CD8-positive, alpha-beta T cell (primary cell): ENCODE measurements at regions of chr20 and their contacts with region 1.

Region 1: DNA sequence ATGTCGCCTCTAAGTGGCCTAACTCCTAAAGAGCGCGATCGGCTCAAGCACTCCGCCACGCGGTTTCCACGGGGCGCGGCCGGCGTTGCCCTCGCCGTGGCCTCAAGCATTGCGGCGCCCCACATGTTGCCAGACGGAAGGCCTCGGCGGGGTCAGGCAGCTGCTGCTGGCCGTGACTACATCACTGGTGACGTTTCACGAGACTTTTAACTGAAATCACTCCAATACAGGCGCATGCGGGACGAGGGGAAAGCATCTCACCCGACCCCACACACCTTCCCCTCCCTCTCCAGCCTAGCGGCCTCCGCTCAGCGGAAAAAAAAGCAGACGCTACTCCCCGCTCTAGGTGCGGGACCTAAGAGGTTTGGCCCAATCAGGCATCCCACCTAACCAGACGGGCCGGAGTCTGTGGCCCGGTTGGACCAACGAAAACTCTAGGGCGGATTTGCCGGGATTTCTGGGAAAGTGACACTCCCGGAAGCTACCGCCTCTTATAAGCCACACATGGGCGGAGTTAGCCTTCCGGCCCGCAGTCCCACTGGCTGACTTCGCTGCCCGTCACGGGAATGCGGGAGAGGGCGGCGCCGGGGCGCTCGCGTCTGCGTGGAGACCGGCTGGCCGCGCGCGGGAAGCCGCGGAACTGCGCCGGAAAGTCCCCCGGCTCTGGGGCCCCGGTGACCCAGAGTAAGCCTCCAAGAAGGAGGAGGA is at the start of gene NXT1:
- DNase-seq: peak; percentile 92 to 98 (median 94)
- ATAC-seq: peak; percentile 77
- H3K4me3 ChIP-seq: peak within 1 kb of the TSS; percentile 89 to 97
- H3K4me3 Mint-ChIP-seq: peak within 1 kb of the TSS; percentile 80
- H3K27ac ChIP-seq: peak within 1 kb of the TSS; percentile 99
- H3K27ac Mint-ChIP-seq: peak within 1 kb of the TSS; percentile 100
- H3K4me1 ChIP-seq: peaks cover 21% of the 10 kb centered on the region
- H3K4me1 Mint-ChIP-seq: peaks cover 23% of the 10 kb centered on the region
- H3K27me3 ChIP-seq: no peaks in the 10 kb centered on the region
- H3K27me3 Mint-ChIP-seq: no peaks in the 10 kb centered on the region
- CTCF ChIP-seq: no peak
- total RNA-seq, gene NXT1: 52.4 to 52.5 TPM

Region 2: GRCh38 chr20:22691369-22692118 is 658.8 kb before region 1 on chr20:
- CTCF ChIA-PET with region 1: no interaction called
- POLR2A ChIA-PET with region 1: no interaction called
- intact Hi-C with region 1: loop called in 1 of 2 experiments (anchors 10 kb)
- DNase-seq: peak in 8 of 9 experiments; percentile 7 to 53 (median 42)
- ATAC-seq: no peak
- H3K4me3 ChIP-seq: no peak overlapping the region
- H3K4me3 Mint-ChIP-seq: no peak overlapping the region
- H3K27ac ChIP-seq: no peak overlapping the region
- H3K27ac Mint-ChIP-seq: no peak overlapping the region
- H3K4me1 ChIP-seq: peaks cover 3% of the 10 kb centered on the region
- H3K4me1 Mint-ChIP-seq: peaks cover 1% of the 10 kb centered on the region
- H3K27me3 ChIP-seq: no peaks in the 10 kb centered on the region
- H3K27me3 Mint-ChIP-seq: peaks cover 3% of the 10 kb centered on the region
- CTCF ChIP-seq: peak; percentile 71

Region 3: GRCh38 chr20:23361598-23362384 is 11.4 kb after region 1 on chr20 and contains the start of gene GZF1:
- CTCF ChIA-PET with region 1: interaction called, 24 read pairs
- POLR2A ChIA-PET with region 1: interaction called, 74 read pairs
- intact Hi-C with region 1: loop called (anchors 1 kb)
- DNase-seq: peak; percentile 96 to 99 (median 98)
- ATAC-seq: peak; percentile 74
- H3K4me3 ChIP-seq: peak within 1 kb of the TSS; percentile 86 to 95
- H3K4me3 Mint-ChIP-seq: peak within 1 kb of the TSS; percentile 93
- H3K27ac ChIP-seq: peak within 1 kb of the TSS; percentile 92 to 97
- H3K27ac Mint-ChIP-seq: peak within 1 kb of the TSS; percentile 95
- H3K4me1 ChIP-seq: peaks cover 41% of the 10 kb centered on the region
- H3K4me1 Mint-ChIP-seq: peaks cover 62% of the 10 kb centered on the region
- H3K27me3 ChIP-seq: no peaks in the 10 kb centered on the region
- H3K27me3 Mint-ChIP-seq: no peaks in the 10 kb centered on the region
- CTCF ChIP-seq: peak; percentile 43
- total RNA-seq, gene GZF1: 44.9 to 49.5 TPM

Region 4: GRCh38 chr20:23420943-23421931 is 70.9 kb after region 1 on chr20 and contains the start of gene NAPB:
- CTCF ChIA-PET with region 1: interaction called, 9 read pairs
- POLR2A ChIA-PET with region 1: interaction called, 57 read pairs
- intact Hi-C with region 1: loop called in 1 of 2 experiments (anchors 1 kb)
- DNase-seq: peak; percentile 85 to 95 (median 93)
- ATAC-seq: peak; percentile 98
- H3K4me3 ChIP-seq: peak within 1 kb of the TSS; percentile 85 to 96
- H3K4me3 Mint-ChIP-seq: peak within 1 kb of the TSS; percentile 87
- H3K27ac ChIP-seq: peak within 1 kb of the TSS; percentile 71 to 76
- H3K27ac Mint-ChIP-seq: peak within 1 kb of the TSS; percentile 89
- H3K4me1 ChIP-seq: peaks cover 23% of the 10 kb centered on the region
- H3K4me1 Mint-ChIP-seq: peaks cover 67% of the 10 kb centered on the region
- H3K27me3 ChIP-seq: peaks cover 0 to 4% of the 10 kb centered on the region in 2 experiments
- H3K27me3 Mint-ChIP-seq: no peaks in the 10 kb centered on the region
- CTCF ChIP-seq: peak; percentile 21
- total RNA-seq, gene NAPB: 10.9 to 11.7 TPM

Region 5: GRCh38 chr20:23606652-23607049 is 256.3 kb after region 1 on chr20:
- CTCF ChIA-PET with region 1: interaction called, 7 read pairs
- POLR2A ChIA-PET with region 1: no interaction called
- intact Hi-C with region 1: loop called in 1 of 2 experiments (anchors 2 kb)
- DNase-seq: peak; percentile 32 to 77 (median 65)
- ATAC-seq: peak; percentile 92
- H3K4me3 ChIP-seq: no peak overlapping the region
- H3K4me3 Mint-ChIP-seq: no peak overlapping the region
- H3K27ac ChIP-seq: no peak overlapping the region
- H3K27ac Mint-ChIP-seq: no peak overlapping the region
- H3K4me1 ChIP-seq: no peaks in the 10 kb centered on the region
- H3K4me1 Mint-ChIP-seq: peaks cover 5% of the 10 kb centered on the region
- H3K27me3 ChIP-seq: no peaks in the 10 kb centered on the region
- H3K27me3 Mint-ChIP-seq: no peaks in the 10 kb centered on the region
- CTCF ChIP-seq: peak; percentile 70